PC-9 (cell line): ENCODE measurements at regions of chr13 and their contacts with region 1.

Region 1: DNA sequence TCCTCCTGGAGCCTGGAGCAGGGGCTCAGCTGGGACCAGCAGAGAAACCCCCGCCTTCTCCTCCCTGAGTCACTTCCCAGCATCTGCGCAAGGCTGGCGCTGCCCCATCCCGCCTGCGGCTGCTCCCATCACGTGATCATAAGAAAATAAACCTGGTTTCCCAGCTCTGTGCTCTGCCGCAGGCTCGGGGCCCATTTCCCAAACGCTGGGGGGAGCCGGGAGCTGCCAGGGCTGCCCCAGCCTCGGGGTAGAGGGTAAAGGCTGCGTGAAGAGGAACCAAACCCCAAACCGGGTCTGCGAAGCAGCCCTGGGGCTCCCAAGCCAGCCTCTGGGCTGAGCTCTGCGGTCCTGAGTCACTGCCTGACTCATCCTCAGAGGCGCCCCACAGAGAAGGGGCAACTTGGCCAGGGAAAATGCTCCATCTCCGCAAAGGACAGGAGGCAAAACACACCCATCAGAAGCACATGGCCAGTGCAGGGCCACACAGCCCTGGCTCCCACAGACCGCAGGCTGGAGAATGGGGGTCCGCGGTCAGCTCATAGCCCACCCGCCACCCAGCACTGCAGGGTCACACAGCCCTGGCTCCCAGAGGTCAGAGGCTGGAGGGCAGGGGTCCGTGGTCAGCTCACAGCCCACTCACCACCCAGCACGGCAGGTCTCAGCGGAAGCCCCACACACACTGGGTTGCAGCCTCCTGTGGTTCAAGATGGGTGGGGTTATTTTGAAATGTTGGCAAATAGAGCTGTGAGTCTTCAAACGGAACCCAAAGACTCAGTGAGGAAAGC is 67.1 kb downstream of the RASA3 start:
- DNase-seq: peak; percentile 98 to 99
- H3K4me3 ChIP-seq: peak overlapping the region; percentile 53
- H3K27ac ChIP-seq: peak overlapping the region; percentile 92
- H3K4me1 ChIP-seq: peaks cover 61% of the 10 kb centered on the region
- H3K27me3 ChIP-seq: no peaks in the 10 kb centered on the region
- CTCF ChIP-seq: no peak

Region 2: GRCh38 chr13:112879283-112879833 is 1186.0 kb before region 1 on chr13:
- CTCF ChIA-PET with region 1: no interaction called
- POLR2A ChIA-PET with region 1: no interaction called
- intact Hi-C with region 1: no loop called
- DNase-seq: no peak
- H3K4me3 ChIP-seq: no peak overlapping the region
- H3K27ac ChIP-seq: no peak overlapping the region
- H3K4me1 ChIP-seq: no peaks in the 10 kb centered on the region
- H3K27me3 ChIP-seq: no peaks in the 10 kb centered on the region
- CTCF ChIP-seq: no peak

Region 3: GRCh38 chr13:113837554-113838355 is 227.6 kb before region 1 on chr13:
- CTCF ChIA-PET with region 1: no interaction called
- POLR2A ChIA-PET with region 1: no interaction called
- intact Hi-C with region 1: loop called (anchors 10 kb)
- DNase-seq: peak; percentile 73 to 90
- H3K4me3 ChIP-seq: no peak overlapping the region
- H3K27ac ChIP-seq: no peak overlapping the region
- H3K4me1 ChIP-seq: peaks cover 33% of the 10 kb centered on the region
- H3K27me3 ChIP-seq: no peaks in the 10 kb centered on the region
- CTCF ChIP-seq: no peak

Region 4: GRCh38 chr13:113970810-113971470 is 94.4 kb before region 1 on chr13:
- CTCF ChIA-PET with region 1: no interaction called
- POLR2A ChIA-PET with region 1: no interaction called
- intact Hi-C with region 1: loop called (anchors 2 kb)
- DNase-seq: peak; percentile 69 to 99
- H3K4me3 ChIP-seq: no peak overlapping the region; the same call in 1 of the 2 replicates
- H3K27ac ChIP-seq: peak overlapping the region; percentile 94
- H3K4me1 ChIP-seq: peaks cover 30% of the 10 kb centered on the region
- H3K27me3 ChIP-seq: no peaks in the 10 kb centered on the region
- CTCF ChIP-seq: no peak

Region 5: DNA sequence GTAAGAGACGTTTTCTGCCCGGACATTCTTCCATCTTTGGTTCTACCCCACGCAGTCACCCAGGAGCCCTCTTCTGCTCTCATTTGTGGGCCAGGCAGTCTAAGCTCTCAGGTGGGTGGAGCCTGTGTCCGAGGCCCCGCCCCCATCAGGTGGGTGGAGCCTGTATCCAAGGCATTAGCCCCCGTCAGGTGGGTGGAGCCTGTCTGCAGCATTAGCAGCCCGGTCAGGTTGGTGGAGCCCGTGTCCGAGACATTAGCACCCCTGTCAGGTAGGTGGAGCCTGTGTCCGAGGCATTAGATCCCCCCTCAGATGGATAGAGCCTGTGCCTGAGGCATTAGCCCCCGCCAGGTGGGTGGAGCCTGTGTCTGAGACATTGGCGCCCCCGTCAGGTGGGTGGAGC is 46.0 kb before region 1 on chr13:
- CTCF ChIA-PET with region 1: no interaction called
- POLR2A ChIA-PET with region 1: no interaction called
- intact Hi-C with region 1: loop called (anchors 5 kb)
- DNase-seq: no peak
- H3K4me3 ChIP-seq: no peak overlapping the region
- H3K27ac ChIP-seq: no peak overlapping the region
- H3K4me1 ChIP-seq: 0 out of 2 replicates have a peak, but pooled peaks cover 13% of the 10 kb centered on the region
- H3K27me3 ChIP-seq: no peaks in the 10 kb centered on the region
- CTCF ChIP-seq: no peak

Region 6: DNA sequence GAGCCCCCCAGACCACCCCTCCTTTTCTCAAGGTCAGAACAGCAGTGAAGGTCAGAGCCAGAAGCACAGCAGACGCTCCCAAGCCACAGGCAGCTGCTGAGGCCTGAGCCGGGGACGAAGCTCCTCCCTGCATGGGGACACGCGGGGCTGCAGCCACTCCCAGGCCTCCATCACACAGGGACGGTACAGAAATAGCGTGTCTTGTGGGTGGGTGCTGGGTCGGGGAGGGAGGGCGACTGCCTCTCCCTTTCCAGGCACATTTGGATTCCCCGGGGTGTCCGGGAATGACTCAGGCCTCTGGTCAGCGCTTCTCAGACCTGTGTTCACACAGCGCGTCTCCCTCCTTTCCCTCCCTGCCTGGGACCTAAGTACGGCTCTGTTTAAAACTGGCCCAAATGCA is 33.9 kb after region 1 on chr13:
- CTCF ChIA-PET with region 1: no interaction called
- POLR2A ChIA-PET with region 1: interaction called, 20 read pairs
- intact Hi-C with region 1: no loop called
- DNase-seq: peak; percentile 64 to 65
- H3K4me3 ChIP-seq: no peak overlapping the region
- H3K27ac ChIP-seq: no peak overlapping the region
- H3K4me1 ChIP-seq: no peaks in the 10 kb centered on the region
- H3K27me3 ChIP-seq: no peaks in the 10 kb centered on the region
- CTCF ChIP-seq: no peak

Region 7: GRCh38 chr13:114226699-114227323 is 161.5 kb after region 1 on chr13:
- CTCF ChIA-PET with region 1: interaction called, 4 read pairs
- POLR2A ChIA-PET with region 1: no interaction called
- intact Hi-C with region 1: loop called (anchors 1 kb)
- DNase-seq: peak; percentile 76 to 87
- H3K4me3 ChIP-seq: no peak overlapping the region
- H3K27ac ChIP-seq: no peak overlapping the region
- H3K4me1 ChIP-seq: 0 out of 2 replicates have a peak, but pooled peaks cover 11% of the 10 kb centered on the region
- H3K27me3 ChIP-seq: peaks cover 9% of the 10 kb centered on the region; the same call in 1 of the 2 replicates
- CTCF ChIP-seq: peak; percentile 95